ENCODE measurements at regions of chr10 and their contacts with region 1.

Region 1: GRCh38 chr10:110843031-110843430 is 28.7 kb upstream of the PDCD4 start:
- DNase-seq: peak; percentile 37
- ATAC-seq: peak; percentile 69
- H3K4me3 Mint-ChIP-seq: peak overlapping the region; percentile 78
- H3K27ac Mint-ChIP-seq: peak overlapping the region; percentile 89
- H3K4me1 Mint-ChIP-seq: peaks cover 77% of the 10 kb centered on the region
- H3K27me3 Mint-ChIP-seq: no peaks in the 10 kb centered on the region
- CTCF ChIP-seq: no peak

Region 2: GRCh38 chr10:110822712-110823323 is 20.2 kb before region 1 on chr10:
- CTCF ChIA-PET with region 1: no interaction called
- POLR2A ChIA-PET with region 1: interaction called, 6 read pairs
- intact Hi-C with region 1: loop called (anchors 2 kb)
- DNase-seq: no peak
- ATAC-seq: no peak
- H3K4me3 Mint-ChIP-seq: no peak overlapping the region
- H3K27ac Mint-ChIP-seq: no peak overlapping the region
- H3K4me1 Mint-ChIP-seq: peaks cover 31% of the 10 kb centered on the region
- H3K27me3 Mint-ChIP-seq: no peaks in the 10 kb centered on the region
- CTCF ChIP-seq: no peak

Region 3: DNA sequence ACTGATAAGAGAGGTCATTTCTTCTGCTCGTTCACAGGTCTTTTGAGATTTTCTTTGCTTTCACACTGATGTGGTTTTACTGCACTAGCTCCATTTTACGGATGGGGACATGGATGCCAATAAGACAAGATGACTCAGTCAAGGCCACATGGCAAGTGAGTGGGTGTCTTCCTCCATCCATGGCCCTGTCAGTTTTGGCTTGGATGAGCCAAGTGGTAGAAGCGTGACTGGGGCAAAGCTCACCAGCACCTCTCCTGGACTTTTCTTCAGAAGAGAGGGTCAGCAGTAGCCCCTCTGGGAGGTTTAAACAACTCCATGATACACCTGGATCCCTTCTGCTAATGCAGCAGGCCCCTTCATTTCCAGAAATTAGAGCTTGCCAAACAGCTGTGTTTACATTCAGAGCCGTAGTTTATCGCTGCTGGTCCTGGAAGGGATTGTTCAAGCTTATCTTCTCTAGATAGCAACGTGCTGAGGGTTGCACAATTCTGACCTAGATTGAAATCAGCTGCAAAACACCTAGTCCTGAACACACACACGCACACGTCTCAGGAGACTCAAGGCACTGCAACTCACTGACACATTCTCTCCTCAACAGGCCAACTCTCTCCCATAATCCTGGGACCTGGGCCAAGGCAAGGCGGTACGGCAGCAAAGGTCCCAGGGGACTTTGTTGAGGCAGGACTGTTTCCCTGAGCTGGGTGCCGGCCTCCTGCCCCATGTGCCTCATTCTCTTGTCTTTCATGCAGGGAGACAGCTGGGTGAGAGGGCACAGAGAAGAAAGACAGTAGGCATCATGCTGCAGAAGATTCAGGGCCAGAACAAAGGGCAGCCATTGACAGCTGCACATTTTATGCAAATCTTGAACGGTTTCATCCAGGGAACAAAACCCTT is 14.5 kb after region 1 on chr10:
- CTCF ChIA-PET with region 1: interaction called, 4 read pairs
- POLR2A ChIA-PET with region 1: interaction called, 64 read pairs
- intact Hi-C with region 1: no loop called
- DNase-seq: no peak
- ATAC-seq: peak; percentile 19
- H3K4me3 Mint-ChIP-seq: no peak overlapping the region
- H3K27ac Mint-ChIP-seq: peak overlapping the region; percentile 30
- H3K4me1 Mint-ChIP-seq: peaks cover 63% of the 10 kb centered on the region
- H3K27me3 Mint-ChIP-seq: no peaks in the 10 kb centered on the region
- CTCF ChIP-seq: no peak

Region 4: GRCh38 chr10:110864662-110865140 is 21.7 kb after region 1 on chr10:
- CTCF ChIA-PET with region 1: interaction called, 17 read pairs
- POLR2A ChIA-PET with region 1: interaction called, 219 read pairs
- intact Hi-C with region 1: loop called (anchors 1 kb)
- DNase-seq: no peak
- ATAC-seq: peak; percentile 50
- H3K4me3 Mint-ChIP-seq: peak overlapping the region; percentile 79
- H3K27ac Mint-ChIP-seq: peak overlapping the region; percentile 97
- H3K4me1 Mint-ChIP-seq: peaks cover 98% of the 10 kb centered on the region
- H3K27me3 Mint-ChIP-seq: no peaks in the 10 kb centered on the region
- CTCF ChIP-seq: no peak

Region 5: DNA sequence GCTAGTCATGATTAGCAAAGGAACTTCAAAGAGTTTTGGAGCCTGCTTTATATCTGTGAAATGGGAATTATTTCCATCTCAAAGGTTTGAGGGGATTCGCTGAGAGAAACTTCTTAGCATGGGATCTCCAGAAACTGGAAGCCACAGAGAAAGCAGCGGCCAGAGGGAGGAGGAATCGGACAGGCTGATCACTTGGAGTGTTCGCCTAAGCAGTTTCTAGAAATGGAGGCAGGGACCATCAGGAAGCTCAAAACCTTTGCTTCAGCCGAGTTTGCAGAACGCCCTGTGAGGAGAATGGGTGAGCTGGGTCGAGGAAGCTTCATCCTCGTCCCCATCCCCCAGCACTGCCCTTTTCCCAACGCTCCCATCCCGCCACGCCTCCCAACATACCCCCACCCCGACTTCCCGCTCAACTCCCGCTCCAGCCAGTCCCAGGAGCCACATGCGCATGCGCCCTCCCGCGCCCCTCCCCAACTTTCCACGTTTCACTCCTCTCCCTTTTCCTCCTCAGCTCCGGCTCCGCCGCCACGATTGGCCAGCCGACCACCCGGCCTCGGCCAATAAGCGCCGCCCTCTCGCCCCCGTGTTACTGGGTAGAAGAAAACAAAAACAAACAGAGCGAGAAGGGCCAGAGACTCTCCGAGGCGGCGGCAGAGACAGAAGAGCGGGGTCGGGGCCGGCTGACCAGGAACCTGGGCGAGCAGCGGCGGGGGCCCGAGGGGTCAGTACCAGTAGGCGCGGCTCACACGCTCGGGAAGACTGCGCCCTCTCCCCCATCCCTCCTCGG is 28.5 kb after region 1 on chr10 and contains the start of gene PDCD4:
- CTCF ChIA-PET with region 1: interaction called, 17 read pairs
- POLR2A ChIA-PET with region 1: interaction called, 219 read pairs
- intact Hi-C with region 1: loop called (anchors 1 kb)
- DNase-seq: peak; percentile 87
- ATAC-seq: peak; percentile 71
- H3K4me3 Mint-ChIP-seq: peak within 1 kb of the TSS; percentile 94
- H3K27ac Mint-ChIP-seq: peak within 1 kb of the TSS; percentile 97
- H3K4me1 Mint-ChIP-seq: peaks cover 76% of the 10 kb centered on the region
- H3K27me3 Mint-ChIP-seq: no peaks in the 10 kb centered on the region
- CTCF ChIP-seq: no peak
- total RNA-seq, gene PDCD4: 143 and 145 TPM in 2 replicates

Measured in activated B cell treated with CpG ODN at 0.5 μM for 24 hours (primary cell).